Pancreas (tissue), 10 donors: ENCODE measurements at regions of chr9 and their contacts with region 1.

Region 1: DNA sequence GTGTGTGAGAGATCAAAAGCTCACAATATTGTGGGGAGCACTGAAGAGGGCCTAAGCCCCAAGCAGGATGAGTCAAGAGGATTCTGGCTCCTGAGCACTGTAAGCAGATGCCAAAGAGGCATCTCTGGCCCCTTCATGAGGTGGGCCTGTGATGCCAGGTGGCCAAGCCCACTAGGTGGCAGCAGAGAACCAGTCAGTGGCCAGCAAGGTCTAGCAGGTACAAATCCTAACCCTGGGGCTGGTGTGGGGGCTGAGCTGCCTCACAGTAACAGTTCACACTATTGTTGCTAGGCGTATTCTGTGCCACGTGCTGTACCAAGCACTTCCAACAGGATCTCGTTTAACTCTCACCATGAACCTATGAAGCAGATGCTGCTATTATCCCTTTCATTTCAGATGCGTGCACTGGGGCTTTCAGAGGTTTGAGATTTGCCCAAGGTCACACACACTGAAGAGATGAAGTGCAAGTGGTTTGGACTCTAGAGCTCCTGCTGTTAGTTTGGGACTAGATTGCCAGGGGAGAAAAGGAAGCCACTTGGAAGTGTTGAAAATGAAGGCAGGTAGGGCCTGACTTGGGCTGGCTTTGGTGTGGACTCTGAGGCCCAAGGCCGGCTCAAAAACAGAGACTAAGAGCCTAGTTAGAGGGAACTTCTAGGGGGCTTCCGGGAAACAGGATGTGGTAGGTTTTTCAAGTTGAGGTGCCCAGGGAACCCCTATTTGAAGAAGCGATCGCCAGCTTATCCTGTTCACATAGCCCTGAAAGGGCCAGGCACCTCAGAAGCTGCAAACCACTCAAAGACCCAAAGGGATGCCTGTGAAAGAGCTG is 4.4 kb upstream of the MLANA start:
- DNase-seq: peak; percentile 53 to 88 (median 78)
- ATAC-seq: peak; percentile 89 to 99 (median 96)
- H3K4me3 ChIP-seq: no peak overlapping the region
- H3K27ac ChIP-seq: no peak overlapping the region
- H3K4me1 ChIP-seq: no peaks in the 10 kb centered on the region
- H3K27me3 ChIP-seq: no peaks in the 10 kb centered on the region
- CTCF ChIP-seq: peak; percentile 78 to 94 (median 90)

Region 2: DNA sequence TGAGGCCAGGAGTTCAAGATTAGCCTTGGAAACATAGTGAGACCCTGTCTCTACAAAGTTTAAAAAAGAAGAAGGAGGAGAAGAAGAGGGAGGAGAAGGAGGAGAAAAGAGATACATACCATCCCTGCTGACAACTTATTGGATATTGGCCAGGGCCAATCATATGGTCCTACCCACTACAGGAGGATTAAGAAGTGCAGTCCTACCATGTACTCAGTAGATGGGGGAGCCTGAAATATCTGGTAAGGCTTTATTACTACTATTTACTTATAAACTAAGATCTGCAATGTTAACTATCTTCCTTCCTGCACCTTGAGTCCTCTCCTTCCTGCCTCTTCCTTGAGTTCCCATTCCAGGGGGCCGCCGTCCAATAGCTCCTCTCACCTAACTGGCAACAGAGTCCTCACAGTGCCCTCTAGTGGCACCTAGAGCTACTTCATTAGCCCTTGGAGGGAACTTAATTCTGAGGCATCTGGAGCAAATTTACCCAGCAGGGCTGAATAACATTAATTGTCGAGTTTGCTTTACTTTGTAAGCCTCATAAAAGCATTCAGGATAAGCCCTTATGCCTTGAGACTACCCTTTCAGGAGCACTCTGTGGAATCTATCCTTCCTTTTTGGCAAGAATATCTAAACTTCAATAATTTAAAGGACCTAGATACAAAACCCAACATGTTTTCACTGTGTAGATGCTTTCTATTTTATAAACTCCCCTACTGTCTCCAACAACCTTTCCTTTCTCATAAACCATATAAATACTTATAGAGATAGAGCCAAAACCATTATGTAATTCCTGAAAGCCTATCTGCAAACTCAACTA is 168.2 kb after region 1 on chr9:
- intact Hi-C with region 1: loop called in 2 of 3 experiments (anchors 5 to 10 kb)
- DNase-seq: peak in 4 of 6 donors; percentile 53 to 76 (median 60)
- ATAC-seq: peak; percentile 91 to 97 (median 96)
- H3K4me3 ChIP-seq: no peak overlapping the region
- H3K27ac ChIP-seq: no peak overlapping the region
- H3K4me1 ChIP-seq: no peaks in the 10 kb centered on the region
- H3K27me3 ChIP-seq: no peaks in the 10 kb centered on the region
- CTCF ChIP-seq: peak; percentile 61 to 75 (median 73)